ENCODE measurements at regions of chrX and their contacts with region 1.

Region 1: GRCh38 chrX:106791495-106791894 is 11.0 kb upstream of the TBC1D8B start:
- H3K4me3 Mint-ChIP-seq: no peak overlapping the region
- H3K27ac Mint-ChIP-seq: no peak overlapping the region
- H3K4me1 Mint-ChIP-seq: no peaks in the 10 kb centered on the region
- H3K27me3 Mint-ChIP-seq: no peaks in the 10 kb centered on the region

Region 2: DNA sequence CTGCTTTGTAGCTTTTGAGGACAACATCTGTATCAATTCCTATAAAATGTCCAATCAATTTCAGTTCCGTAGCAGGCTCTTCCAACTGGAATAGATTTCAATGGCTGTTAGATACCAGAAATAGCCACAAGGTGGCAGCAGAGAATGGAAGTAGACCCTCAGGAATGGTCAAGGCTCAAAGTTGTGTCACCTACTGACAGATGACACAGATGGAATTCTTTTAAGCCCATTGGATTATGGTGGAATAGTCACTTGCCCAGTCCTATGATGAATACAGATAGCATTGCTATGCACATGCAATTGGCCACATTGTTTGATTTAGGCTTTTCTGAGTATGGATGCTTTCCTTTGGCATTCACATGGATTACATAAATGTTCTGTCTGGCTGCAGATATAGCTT is 310.2 kb before region 1 on chrX:
- intact Hi-C with region 1: loop called (anchors 10 kb)
- H3K4me3 Mint-ChIP-seq: no peak overlapping the region
- H3K27ac Mint-ChIP-seq: no peak overlapping the region
- H3K4me1 Mint-ChIP-seq: no peaks in the 10 kb centered on the region
- H3K27me3 Mint-ChIP-seq: no peaks in the 10 kb centered on the region

Region 3: DNA sequence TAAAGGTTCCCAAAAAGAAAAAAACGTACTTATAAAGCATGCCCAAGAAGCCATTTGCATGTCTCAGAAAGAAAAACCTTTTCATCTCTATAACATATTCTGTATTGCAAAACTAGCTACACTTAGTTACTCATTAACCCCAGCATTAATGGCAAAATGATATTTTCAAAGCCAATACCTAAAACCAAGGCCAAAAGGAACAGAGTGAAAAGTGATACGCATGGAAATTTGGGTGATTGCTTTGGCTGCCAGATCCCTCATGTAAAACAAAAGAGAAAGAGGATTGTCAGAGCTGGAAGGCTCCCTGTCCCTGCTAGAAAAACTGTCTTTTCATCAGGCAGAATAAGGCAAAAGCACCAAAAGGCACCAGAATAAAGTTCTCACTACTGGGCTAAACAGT is 226.5 kb before region 1 on chrX:
- intact Hi-C with region 1: no loop called
- H3K4me3 Mint-ChIP-seq: no peak overlapping the region
- H3K27ac Mint-ChIP-seq: no peak overlapping the region
- H3K4me1 Mint-ChIP-seq: no peaks in the 10 kb centered on the region
- H3K27me3 Mint-ChIP-seq: no peaks in the 10 kb centered on the region